ENCODE measurements at regions of chr1 and their contacts with region 1.

Region 1: DNA sequence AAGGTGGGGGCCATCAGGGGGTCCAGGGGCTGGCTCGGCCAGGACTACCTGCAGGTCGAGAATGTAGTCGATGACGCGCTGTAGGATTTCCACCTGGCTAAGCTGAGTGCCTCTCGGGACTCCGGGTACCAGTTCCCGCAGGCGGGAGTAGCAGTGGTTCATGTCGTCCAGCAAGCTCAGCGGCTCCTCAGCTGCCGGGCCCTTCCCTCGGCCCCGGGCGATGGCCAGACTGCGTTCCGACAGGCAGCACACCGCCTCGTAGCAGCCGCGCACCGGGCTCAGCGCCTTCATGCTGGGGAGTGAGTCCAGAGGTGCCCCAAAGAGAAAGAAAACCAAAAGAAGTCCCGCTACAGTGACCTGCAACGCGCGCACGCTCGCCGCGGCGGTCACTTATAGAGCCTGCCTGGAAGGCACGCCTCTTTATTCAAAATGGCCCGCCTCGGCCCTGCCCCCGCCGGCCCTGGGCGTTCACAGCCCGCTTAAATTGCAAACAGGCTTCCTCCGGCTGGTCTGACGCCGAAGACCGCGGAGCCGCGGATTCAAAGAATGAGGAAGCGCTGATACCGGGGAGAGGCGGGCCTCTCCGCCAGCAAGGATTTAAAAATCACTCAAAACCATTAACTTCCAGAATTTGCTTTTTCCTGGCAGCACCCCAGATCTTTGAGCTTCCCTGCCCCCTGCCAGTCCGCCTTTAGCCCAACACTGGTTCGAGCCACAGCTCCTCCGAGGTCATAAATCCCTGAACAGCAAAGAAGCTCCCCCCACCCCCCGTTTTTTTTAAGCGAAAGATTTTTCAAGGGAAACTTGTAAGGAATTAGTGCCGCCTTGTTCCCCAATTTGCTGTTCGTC is at the start of gene ID3:
- DNase-seq: peak; percentile 76 to 98 (median 84)
- ATAC-seq: peak; percentile 70
- H3K4me3 ChIP-seq: peak within 1 kb of the TSS; percentile 74
- H3K27ac ChIP-seq: peak within 1 kb of the TSS; percentile 80
- H3K4me1 ChIP-seq: peaks cover 60 to 71% of the 10 kb centered on the region in 2 experiments
- H3K27me3 ChIP-seq: no peaks in the 10 kb centered on the region
- CTCF ChIP-seq: no peak; a peak in 1 of 6 replicates
- EP300 ChIP-seq: peak; percentile 38
- POLR2A ChIP-seq: peak; percentile 99
- RAD21 ChIP-seq: no peak
- polyA plus RNA-seq, gene ID3: 6.8 to 13.2 TPM

Region 2: DNA sequence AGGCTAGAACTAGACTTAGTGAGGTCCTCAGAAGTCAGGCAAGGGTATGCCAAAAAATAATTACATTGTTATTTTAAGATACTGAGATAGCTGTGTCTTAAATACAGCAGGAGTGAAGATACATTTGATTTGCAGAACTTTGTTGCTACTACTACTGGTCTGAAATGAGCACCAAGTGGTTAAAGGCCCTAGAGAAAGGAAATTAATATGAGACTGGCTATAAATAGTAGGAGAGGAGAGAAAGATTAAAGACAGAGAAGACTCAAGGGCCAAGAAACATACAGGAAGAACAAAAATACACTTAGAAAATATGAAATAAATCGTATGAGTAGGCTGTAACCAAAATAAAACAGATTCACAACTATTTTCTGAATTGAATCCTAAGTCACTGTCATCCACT is 236.6 kb before region 1 on chr1:
- CTCF ChIA-PET with region 1: no interaction called
- POLR2A ChIA-PET with region 1: no interaction called
- in situ Hi-C with region 1: no loop called
- intact Hi-C with region 1: no loop called
- DNase-seq: no peak
- ATAC-seq: no peak
- H3K4me3 ChIP-seq: no peak overlapping the region
- H3K27ac ChIP-seq: no peak overlapping the region
- H3K4me1 ChIP-seq: no peaks in the 10 kb centered on the region
- H3K27me3 ChIP-seq: no peaks in the 10 kb centered on the region
- CTCF ChIP-seq: no peak
- EP300 ChIP-seq: no peak
- POLR2A ChIP-seq: no peak
- RAD21 ChIP-seq: no peak

Region 3: DNA sequence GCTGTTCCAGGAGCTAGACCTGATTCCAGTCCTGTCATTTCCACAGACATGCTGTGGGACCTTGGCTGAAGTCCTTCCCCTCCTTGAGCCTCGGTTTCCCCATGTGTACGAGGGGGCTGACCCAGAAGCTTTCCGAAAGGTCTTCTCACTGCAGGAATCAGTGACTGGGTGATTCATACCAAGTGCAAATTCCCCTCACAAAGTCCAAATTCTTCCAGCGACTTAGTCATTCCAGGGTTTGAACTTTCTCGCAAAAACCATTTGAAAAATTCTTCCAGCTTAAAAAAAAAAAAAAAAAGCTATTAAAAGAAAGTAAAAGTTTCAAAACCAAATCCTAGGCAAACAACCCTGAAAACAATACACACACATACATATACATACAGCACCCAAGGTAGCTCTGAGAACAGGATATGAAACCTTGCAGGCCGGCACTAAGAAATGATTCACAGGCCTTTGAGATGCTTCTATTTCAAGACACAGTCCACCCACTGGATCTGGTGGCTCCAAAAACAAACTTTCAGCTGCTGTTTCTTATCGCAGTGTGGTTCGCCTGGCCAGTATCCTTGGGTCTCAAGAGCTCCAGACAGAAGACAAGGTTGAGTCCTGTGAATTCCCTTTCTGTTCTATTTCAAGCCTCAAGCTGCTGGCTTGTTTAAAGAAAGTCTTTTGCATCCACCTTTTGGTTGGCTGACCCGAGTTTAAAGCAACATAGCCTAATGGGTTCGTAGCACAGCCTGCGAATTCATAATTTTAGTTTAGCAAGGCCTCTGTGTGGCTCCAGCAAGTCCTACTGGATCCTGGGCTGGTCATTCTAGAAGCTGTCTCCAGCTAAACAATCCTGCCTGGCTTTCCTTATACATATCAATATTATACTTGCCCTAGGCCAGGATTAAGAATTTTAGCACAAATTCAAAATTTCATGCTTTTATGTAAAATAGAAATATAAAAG is 18.0 kb after region 1 on chr1:
- CTCF ChIA-PET with region 1: no interaction called
- POLR2A ChIA-PET with region 1: interaction called, 10 read pairs
- in situ Hi-C with region 1: no loop called
- intact Hi-C with region 1: no loop called
- DNase-seq: peak; percentile 50 to 69 (median 56)
- ATAC-seq: peak; percentile 75
- H3K4me3 ChIP-seq: no peak overlapping the region
- H3K27ac ChIP-seq: peak overlapping the region; percentile 17; the same call in 1 of the 3 replicates
- H3K4me1 ChIP-seq: peaks cover 3 to 10% of the 10 kb centered on the region in 2 experiments
- H3K27me3 ChIP-seq: no peaks in the 10 kb centered on the region; a peak in 1 of 5 replicates
- CTCF ChIP-seq: no peak
- EP300 ChIP-seq: no peak
- POLR2A ChIP-seq: no peak
- RAD21 ChIP-seq: no peak

Region 4: DNA sequence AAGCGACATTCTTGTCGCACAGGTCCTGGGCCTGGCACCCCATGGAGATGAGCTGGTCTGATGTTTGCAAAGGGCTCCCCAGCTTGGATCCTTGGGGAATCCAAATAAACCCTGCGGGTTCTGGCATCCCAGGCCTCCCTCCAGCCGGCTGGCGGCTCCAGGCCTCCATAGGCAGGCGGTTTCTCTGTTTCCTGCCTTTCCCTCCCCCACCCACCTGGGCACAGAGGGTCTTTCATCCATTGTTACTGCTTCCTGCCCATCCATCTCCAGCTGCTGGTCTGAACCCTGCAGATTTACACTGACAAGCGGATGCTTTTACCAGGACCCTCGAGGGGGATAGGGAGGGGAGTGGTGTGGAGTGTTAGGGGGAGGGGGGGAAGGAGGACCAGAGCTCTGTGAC is 39.1 kb after region 1 on chr1:
- CTCF ChIA-PET with region 1: no interaction called
- POLR2A ChIA-PET with region 1: interaction called, 25 read pairs
- in situ Hi-C with region 1: no loop called
- intact Hi-C with region 1: loop called (anchors 5 kb)
- DNase-seq: no peak
- ATAC-seq: no peak
- H3K4me3 ChIP-seq: no peak overlapping the region
- H3K27ac ChIP-seq: no peak overlapping the region
- H3K4me1 ChIP-seq: peaks cover 18 to 20% of the 10 kb centered on the region in 2 experiments
- H3K27me3 ChIP-seq: peaks cover 0 to 5% of the 10 kb centered on the region in 2 experiments; a peak in 2 of 5 replicates
- CTCF ChIP-seq: no peak
- EP300 ChIP-seq: no peak
- POLR2A ChIP-seq: no peak
- RAD21 ChIP-seq: no peak

Region 5: GRCh38 chr1:23634842-23635651 is 75.7 kb after region 1 on chr1:
- CTCF ChIA-PET with region 1: interaction called, 3 read pairs
- POLR2A ChIA-PET with region 1: interaction called, 10 read pairs
- in situ Hi-C with region 1: no loop called
- intact Hi-C with region 1: no loop called
- DNase-seq: peak; percentile 76 to 87 (median 86)
- ATAC-seq: peak; percentile 82
- H3K4me3 ChIP-seq: peak overlapping the region; percentile 4; the same call in 1 of the 2 replicates
- H3K27ac ChIP-seq: peak overlapping the region; percentile 35; the same call in 1 of the 3 replicates
- H3K4me1 ChIP-seq: peaks cover 12 to 21% of the 10 kb centered on the region in 2 experiments; a peak in 3 of 5 replicates
- H3K27me3 ChIP-seq: peaks cover 3 to 17% of the 10 kb centered on the region in 2 experiments; a peak in 2 of 5 replicates
- CTCF ChIP-seq: peak; percentile 78 to 98 (median 97)
- EP300 ChIP-seq: no peak
- POLR2A ChIP-seq: no peak
- RAD21 ChIP-seq: peak; percentile 41 to 72

Region 6: DNA sequence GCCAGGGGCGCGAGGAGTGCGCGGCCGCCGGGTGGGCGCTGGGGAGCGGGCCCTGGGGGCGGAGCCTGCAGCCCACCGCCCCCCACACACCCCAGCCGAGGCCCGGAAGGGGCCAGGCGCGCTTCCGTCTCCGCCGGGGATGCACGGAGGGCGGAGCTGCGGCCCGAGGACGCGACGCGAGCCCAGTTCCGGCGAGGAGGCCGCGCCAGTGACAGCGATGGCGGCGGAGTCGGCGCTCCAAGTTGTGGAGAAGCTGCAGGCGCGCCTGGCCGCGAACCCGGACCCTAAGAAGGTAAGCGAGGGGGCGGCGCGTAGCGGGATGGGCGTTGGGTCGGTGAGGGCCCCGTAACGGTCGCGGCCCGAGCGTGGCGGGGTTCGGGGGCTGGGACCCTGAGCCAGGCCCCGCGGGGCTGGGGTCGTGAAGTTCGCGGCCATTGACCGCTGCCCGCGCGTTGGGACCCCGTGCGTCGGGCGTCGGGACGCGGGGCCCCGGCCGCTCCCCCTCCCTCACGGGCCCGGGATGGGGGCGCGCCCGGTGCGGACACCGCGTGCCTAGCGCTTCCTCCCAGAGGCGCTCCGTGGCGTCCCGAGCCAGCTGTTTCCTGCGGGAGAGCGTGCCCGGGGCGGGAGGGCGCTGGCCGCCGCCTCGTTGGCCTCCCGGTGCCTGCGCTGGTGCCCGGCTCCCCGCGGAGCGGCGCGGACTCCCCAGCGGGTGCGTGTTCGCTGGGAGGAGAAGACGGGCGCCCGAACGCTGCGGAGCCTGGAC is 184.1 kb after region 1 on chr1 and contains the start of gene ELOA:
- CTCF ChIA-PET with region 1: no interaction called
- POLR2A ChIA-PET with region 1: interaction called, 3 read pairs
- in situ Hi-C with region 1: no loop called
- intact Hi-C with region 1: loop called (anchors 5 kb)
- DNase-seq: peak; percentile 89 to 97 (median 95)
- ATAC-seq: peak; percentile 93
- H3K4me3 ChIP-seq: peak within 1 kb of the TSS; percentile 96
- H3K27ac ChIP-seq: peak within 1 kb of the TSS; percentile 87
- H3K4me1 ChIP-seq: peaks cover 23 to 36% of the 10 kb centered on the region in 2 experiments
- H3K27me3 ChIP-seq: no peaks in the 10 kb centered on the region
- CTCF ChIP-seq: no peak
- EP300 ChIP-seq: no peak; the same call in 1 of the 2 replicates
- POLR2A ChIP-seq: peak; percentile 94
- RAD21 ChIP-seq: no peak; a peak in 1 of 4 replicates
- polyA plus RNA-seq, gene ELOA: 31.9 to 53.6 TPM

Measured in K562 (cell line).